ENCODE measurements at regions of chr12 and their contacts with region 1.

Region 1: DNA sequence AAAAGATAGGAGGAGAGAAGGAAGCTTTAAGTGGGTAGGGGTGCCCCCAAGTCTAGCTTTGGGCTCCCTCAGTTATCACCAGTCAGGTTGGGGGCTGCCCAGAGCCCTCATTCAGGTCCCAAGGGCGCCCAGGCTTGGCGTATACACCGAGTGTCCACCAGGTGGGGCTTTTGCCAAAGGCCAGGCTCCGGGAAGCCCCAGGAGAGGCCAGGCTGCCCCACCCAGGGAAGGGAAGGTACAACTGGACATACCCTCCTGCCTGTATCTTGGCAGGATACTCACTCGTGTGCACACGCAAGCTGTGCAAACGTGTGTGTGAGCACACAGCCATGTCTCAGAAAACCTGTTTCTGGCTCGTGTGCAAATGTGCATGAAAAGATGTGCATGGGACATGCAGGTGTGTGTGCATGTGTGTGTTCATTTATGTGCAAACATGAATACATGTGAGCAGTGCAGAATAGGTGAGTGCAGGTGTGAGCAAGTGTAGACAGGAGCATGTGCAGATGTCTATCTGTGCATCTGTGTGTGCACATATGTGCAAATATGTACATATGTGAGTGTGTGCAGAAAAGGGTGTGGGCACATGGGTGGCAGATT is 103.9 kb upstream of the MYL2 start:
- DNase-seq: peak; percentile 6 to 20
- ATAC-seq: peak in 1 of 2 donors; percentile 66
- H3K4me3 ChIP-seq: no peak overlapping the region
- H3K27ac ChIP-seq: no peak overlapping the region
- H3K4me1 ChIP-seq: no peaks in the 10 kb centered on the region
- H3K27me3 ChIP-seq: peaks cover 0 to 17% (median 7%) of the 10 kb centered on the region in 3 donors
- CTCF ChIP-seq: peak in 4 of 5 experiments; percentile 43 to 54 (median 50)
- POLR2A ChIP-seq: no peak

Region 2: GRCh38 chr12:111298582-111299436 is 274.5 kb after region 1 on chr12:
- in situ Hi-C with region 1: no loop called
- intact Hi-C with region 1: loop called (anchors 5 kb)
- DNase-seq: peak in 1 of 2 donors; percentile 14
- ATAC-seq: peak in 1 of 2 donors; percentile 53
- H3K4me3 ChIP-seq: no peak overlapping the region
- H3K27ac ChIP-seq: no peak overlapping the region
- H3K4me1 ChIP-seq: no peaks in the 10 kb centered on the region
- H3K27me3 ChIP-seq: no peaks in the 10 kb centered on the region
- CTCF ChIP-seq: peak; percentile 43 to 75 (median 60)
- POLR2A ChIP-seq: no peak